Cardiac septum (tissue), 1 donor: ENCODE measurements at regions of chr3 and their contacts with region 1.

Region 1: DNA sequence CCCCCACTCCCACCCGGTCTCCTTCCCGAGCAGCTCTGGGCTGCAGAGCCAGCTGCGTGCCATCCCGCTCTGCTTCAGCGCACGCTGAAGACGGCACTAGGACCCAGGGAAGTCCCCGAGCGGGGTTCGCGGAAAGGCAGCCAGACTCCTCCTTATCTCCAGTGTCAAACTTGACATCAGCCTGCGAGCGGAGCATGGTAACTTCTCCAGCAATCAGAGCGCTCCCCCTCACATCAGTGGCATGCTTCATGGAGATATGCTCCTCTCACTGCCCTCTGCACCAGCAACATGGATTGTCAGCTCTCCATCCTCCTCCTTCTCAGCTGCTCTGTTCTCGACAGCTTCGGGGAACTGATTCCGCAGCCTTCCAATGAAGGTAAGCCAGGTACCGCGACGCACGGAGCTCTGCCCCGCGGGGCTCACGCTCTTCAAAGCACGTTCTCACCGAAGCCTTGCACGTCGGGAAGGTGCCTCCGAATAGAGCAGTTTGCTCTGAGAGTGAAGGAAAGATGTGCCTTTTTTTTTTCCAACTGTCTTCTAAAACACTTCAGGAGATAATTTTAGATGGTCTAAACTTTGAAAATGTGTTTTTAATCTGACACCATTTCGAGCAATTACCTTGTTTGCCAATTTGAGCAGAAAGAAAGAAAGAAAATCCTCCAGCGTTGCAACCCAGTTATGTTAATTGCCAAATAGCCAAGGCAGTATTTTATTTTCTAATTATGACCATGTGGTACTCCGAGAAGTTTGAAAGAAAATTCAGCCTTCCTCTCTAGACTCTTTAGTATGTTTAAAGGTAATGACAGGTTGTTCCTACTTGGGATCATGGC is at the start of gene EPHA3:
- DNase-seq: peak; percentile 89
- total RNA-seq, gene EPHA3: 9.2 TPM

Region 2: GRCh38 chr3:88219138-88219792 is 888.4 kb before region 1 on chr3:
- intact Hi-C with region 1: loop called (anchors 10 kb)
- DNase-seq: no peak

Region 3: GRCh38 chr3:89013536-89013935 is 94.1 kb before region 1 on chr3:
- intact Hi-C with region 1: no loop called
- DNase-seq: no peak

Region 4: DNA sequence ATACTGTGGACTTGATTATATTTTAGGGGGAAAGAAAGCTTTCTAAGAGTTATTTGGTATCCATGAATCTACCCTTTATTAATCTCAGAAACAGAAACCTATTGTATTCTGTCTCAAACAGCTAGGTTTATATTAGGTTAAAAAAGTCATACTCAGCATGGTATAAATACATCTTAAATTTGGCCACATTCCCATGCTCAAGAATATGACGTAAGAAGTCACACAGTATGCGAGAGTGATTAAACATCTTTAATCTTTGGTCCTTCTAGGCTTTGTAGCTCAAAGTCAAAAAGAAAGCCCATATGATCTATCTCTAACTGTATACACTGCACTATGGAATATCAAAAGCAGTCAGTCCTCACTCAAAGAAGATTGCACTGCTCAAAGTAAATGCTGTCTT is 131.2 kb after region 1 on chr3:
- intact Hi-C with region 1: no loop called
- DNase-seq: no peak

Region 5: GRCh38 chr3:89851974-89852621 is 744.4 kb after region 1 on chr3:
- intact Hi-C with region 1: loop called (anchors 10 kb)
- DNase-seq: no peak

Region 6: DNA sequence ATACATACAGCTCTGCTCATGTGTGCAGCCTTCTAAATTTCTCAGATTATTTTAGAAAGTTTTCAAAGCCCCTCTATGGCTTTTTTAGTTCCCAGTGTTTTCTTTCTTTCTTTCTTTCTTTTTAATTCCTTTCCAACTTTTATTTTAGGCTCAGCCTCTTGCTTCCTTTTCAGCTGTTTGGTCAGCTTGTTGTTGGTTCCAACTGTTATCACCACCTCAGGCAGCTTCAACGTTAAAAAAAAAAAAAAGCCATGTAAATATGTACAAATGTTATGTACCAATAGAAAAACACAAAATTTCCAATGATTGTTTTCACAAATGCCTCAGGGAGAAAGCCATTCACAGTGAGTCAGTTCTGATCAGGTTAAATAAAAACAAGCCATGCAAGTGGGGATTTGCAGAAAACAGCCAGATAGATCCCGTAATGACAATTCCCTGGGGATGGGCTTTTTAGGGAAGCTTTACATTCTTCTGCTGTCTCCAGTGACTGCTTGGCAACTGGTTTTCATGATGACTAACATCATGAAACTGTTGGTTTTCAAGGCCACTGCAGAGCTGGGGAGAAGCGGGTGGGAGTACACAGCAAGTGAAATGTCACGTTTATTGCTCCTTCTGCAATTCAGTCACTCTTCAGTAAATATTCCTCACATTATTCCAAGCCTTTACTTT is 908.1 kb after region 1 on chr3:
- intact Hi-C with region 1: loop called (anchors 10 kb)
- DNase-seq: no peak

Region 7: GRCh38 chr3:90091204-90091924 is 983.7 kb after region 1 on chr3:
- intact Hi-C with region 1: loop called (anchors 10 kb)
- DNase-seq: no peak